K562 (cell line): ENCODE measurements at regions of chr15 and their contacts with region 1.

Region 1: DNA sequence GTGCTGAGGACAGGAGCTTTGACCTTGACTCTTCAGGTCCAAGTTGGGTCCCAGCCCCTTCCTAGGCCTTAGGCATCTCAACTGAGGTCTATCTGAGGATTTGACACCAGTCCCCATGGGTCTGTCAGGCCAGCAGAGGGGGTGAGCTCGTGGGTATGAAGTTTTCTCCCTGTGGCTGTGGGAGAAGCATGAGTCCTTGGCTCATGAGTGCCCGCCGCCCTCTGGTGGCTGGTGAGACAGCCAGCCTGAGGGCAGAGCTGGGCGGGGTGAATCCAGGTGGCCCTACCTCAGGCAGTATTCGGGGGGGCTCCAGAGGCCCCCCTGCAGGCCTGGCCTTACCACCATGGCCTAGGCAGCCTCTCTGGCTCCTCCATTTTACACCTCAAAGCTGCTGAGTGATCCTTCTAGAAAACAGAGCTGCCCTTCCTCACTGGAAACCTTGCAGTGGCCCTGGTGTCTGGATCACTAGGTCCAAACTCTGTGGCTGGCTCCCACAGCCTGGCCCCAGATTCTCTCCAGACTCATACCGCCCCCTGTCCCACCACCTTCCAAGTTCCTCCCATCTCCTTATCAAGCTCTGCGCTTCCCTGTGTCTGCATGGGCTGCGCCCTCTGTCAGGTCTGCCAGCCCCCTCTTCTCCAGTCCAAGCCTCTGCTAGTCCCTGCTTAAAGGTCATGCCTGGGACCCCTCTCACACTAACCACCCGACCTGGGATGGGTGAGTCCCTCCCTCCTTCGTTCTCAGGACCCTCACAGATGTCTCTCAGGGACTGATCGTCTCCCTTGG is 16.1 kb downstream of the SH2D7 start:
- DNase-seq: peak; percentile 73 to 75 (median 74)
- ATAC-seq: peak; percentile 92
- H3K4me3 ChIP-seq: no peak overlapping the region
- H3K27ac ChIP-seq: no peak overlapping the region
- H3K4me1 ChIP-seq: peaks cover 0 to 7% of the 10 kb centered on the region in 2 experiments; a peak in 2 of 5 replicates
- H3K27me3 ChIP-seq: no peaks in the 10 kb centered on the region
- CTCF ChIP-seq: peak; percentile 86 to 97 (median 89)
- EP300 ChIP-seq: no peak
- POLR2A ChIP-seq: no peak
- RAD21 ChIP-seq: peak; percentile 87 to 92

Region 2: GRCh38 chr15:77909182-77909940 is 199.1 kb before region 1 on chr15:
- CTCF ChIA-PET with region 1: no interaction called
- POLR2A ChIA-PET with region 1: no interaction called
- in situ Hi-C with region 1: no loop called
- intact Hi-C with region 1: no loop called
- DNase-seq: no peak
- ATAC-seq: no peak
- H3K4me3 ChIP-seq: no peak overlapping the region
- H3K27ac ChIP-seq: no peak overlapping the region
- H3K4me1 ChIP-seq: peaks cover 2 to 22% of the 10 kb centered on the region in 2 experiments; a peak in 3 of 5 replicates
- H3K27me3 ChIP-seq: peaks cover 0 to 11% of the 10 kb centered on the region in 2 experiments; a peak in 3 of 5 replicates
- CTCF ChIP-seq: no peak
- EP300 ChIP-seq: no peak
- POLR2A ChIP-seq: no peak
- RAD21 ChIP-seq: no peak

Region 3: DNA sequence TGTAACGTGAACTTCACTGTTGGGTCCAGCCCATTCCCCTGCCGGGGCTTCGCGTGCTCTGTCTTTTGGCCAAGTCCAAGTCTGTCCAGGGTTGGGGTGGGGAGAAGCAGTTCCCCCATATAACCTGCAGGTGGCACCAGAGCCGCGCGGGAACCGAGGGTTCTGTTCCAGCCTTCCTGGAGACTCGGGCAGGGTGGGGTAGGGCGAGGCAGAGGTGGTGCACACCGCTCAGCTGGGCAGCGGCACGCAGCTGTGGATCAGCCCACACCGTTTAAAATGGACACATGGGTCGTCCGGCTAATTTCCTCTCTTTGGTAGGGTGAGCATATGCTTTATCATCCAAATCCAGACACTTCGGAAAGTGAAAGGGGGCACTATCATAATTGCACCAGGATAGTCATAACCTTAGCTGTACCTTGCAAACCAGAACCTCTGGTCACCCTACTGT is 149.0 kb before region 1 on chr15:
- CTCF ChIA-PET with region 1: interaction called, 16 read pairs
- POLR2A ChIA-PET with region 1: interaction called, 3 read pairs
- in situ Hi-C with region 1: loop called (anchors 5 kb)
- intact Hi-C with region 1: loop called (anchors 1 kb)
- DNase-seq: peak; percentile 84 to 90 (median 90)
- ATAC-seq: peak; percentile 100
- H3K4me3 ChIP-seq: no peak overlapping the region
- H3K27ac ChIP-seq: no peak overlapping the region
- H3K4me1 ChIP-seq: peaks cover 0 to 5% of the 10 kb centered on the region in 2 experiments; a peak in 3 of 5 replicates
- H3K27me3 ChIP-seq: peaks cover 5 to 13% of the 10 kb centered on the region in 2 experiments; a peak in 3 of 5 replicates
- CTCF ChIP-seq: peak; percentile 93 to 96 (median 95)
- EP300 ChIP-seq: no peak
- POLR2A ChIP-seq: no peak
- RAD21 ChIP-seq: peak; percentile 93 to 94

Region 4: GRCh38 chr15:78000091-78000926 is 108.2 kb before region 1 on chr15:
- CTCF ChIA-PET with region 1: interaction called, 15 read pairs
- POLR2A ChIA-PET with region 1: interaction called, 3 read pairs
- in situ Hi-C with region 1: no loop called
- intact Hi-C with region 1: loop called (anchors 1 kb)
- DNase-seq: peak; percentile 46 to 72 (median 62)
- ATAC-seq: peak; percentile 96
- H3K4me3 ChIP-seq: no peak overlapping the region
- H3K27ac ChIP-seq: no peak overlapping the region
- H3K4me1 ChIP-seq: peaks cover 0 to 4% of the 10 kb centered on the region in 2 experiments; a peak in 1 of 5 replicates
- H3K27me3 ChIP-seq: no peaks in the 10 kb centered on the region
- CTCF ChIP-seq: peak; percentile 66 to 77 (median 73)
- EP300 ChIP-seq: no peak
- POLR2A ChIP-seq: no peak
- RAD21 ChIP-seq: peak; percentile 42 to 70; a peak in 3 of 4 replicates

Region 5: GRCh38 chr15:78012643-78013077 is 95.8 kb before region 1 on chr15:
- CTCF ChIA-PET with region 1: no interaction called
- POLR2A ChIA-PET with region 1: no interaction called
- in situ Hi-C with region 1: no loop called
- intact Hi-C with region 1: no loop called
- DNase-seq: no peak
- ATAC-seq: no peak
- H3K4me3 ChIP-seq: no peak overlapping the region
- H3K27ac ChIP-seq: no peak overlapping the region
- H3K4me1 ChIP-seq: no peaks in the 10 kb centered on the region
- H3K27me3 ChIP-seq: no peaks in the 10 kb centered on the region
- CTCF ChIP-seq: no peak
- EP300 ChIP-seq: no peak
- POLR2A ChIP-seq: no peak
- RAD21 ChIP-seq: no peak

Region 6: DNA sequence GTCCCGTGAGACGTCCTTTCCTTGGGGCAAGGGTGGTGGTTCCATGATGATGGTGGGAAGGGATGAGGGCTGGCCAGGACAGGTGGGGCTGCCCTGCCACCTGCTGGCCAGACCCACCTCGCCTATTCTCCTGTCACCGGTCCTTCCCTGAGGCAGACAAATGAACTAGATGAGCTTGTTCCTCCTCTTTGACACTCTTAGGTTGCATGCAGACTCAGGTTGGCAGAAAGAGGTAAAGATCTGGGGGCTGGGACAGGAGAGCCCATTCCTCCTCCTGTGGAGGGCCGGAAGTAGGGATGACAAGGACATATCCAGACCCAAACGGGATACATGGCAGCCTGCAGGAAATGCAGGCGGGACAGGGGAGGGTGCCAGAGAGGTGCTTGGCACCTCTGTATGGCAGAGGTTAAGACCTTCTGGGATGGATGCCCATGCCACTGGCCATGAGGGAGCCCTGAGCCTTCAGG is 87.3 kb after region 1 on chr15:
- CTCF ChIA-PET with region 1: interaction called, 54 read pairs
- POLR2A ChIA-PET with region 1: no interaction called
- in situ Hi-C with region 1: loop called (anchors 5 kb)
- intact Hi-C with region 1: loop called (anchors 1 kb)
- DNase-seq: peak; percentile 60 to 75 (median 71)
- ATAC-seq: peak; percentile 95
- H3K4me3 ChIP-seq: no peak overlapping the region
- H3K27ac ChIP-seq: no peak overlapping the region
- H3K4me1 ChIP-seq: peaks cover 0 to 4% of the 10 kb centered on the region in 2 experiments; a peak in 1 of 5 replicates
- H3K27me3 ChIP-seq: peaks cover 6 to 29% of the 10 kb centered on the region in 2 experiments; a peak in 4 of 5 replicates
- CTCF ChIP-seq: peak; percentile 85 to 90 (median 88)
- EP300 ChIP-seq: no peak
- POLR2A ChIP-seq: no peak
- RAD21 ChIP-seq: peak; percentile 82 to 93

Region 7: DNA sequence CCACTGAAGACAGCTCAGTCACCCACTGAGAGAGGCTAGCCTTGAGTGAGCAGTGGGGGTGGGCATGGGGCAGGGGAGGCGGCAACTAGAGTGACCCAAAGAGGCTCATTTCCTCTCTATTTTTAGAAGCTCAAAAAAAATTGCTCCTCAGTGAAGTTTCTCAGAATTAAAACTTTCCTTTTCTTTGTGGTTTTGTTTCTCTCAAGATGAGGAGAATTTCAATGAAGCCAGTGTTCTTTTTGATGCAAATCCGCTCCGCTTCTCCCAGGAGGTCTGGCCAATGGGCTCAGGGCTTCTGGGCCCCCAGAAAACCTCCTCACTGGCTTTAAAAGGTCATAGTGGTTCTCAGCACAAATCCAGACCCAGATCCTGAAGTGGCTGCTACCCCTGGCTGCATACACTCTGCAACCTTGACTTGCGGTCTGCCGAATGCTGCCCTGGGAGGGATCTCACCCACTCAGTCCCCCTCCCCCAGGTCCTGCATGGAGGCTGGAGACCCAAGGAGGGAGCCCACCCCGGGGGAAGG is 126.1 kb after region 1 on chr15 and contains the start of gene ACSBG1:
- CTCF ChIA-PET with region 1: interaction called, 25 read pairs
- POLR2A ChIA-PET with region 1: interaction called, 3 read pairs
- in situ Hi-C with region 1: loop called (anchors 5 kb)
- intact Hi-C with region 1: no loop called
- DNase-seq: no peak
- ATAC-seq: no peak
- H3K4me3 ChIP-seq: no peak within 1 kb of the TSS
- H3K27ac ChIP-seq: no peak within 1 kb of the TSS
- H3K4me1 ChIP-seq: peaks cover 0 to 4% of the 10 kb centered on the region in 2 experiments; a peak in 1 of 5 replicates
- H3K27me3 ChIP-seq: peaks cover 17 to 50% of the 10 kb centered on the region in 2 experiments; a peak in 4 of 5 replicates
- CTCF ChIP-seq: no peak
- EP300 ChIP-seq: no peak
- POLR2A ChIP-seq: no peak
- RAD21 ChIP-seq: no peak
- polyA plus RNA-seq, gene ACSBG1: 0.36 to 0.75 TPM

Region 8: GRCh38 chr15:78241007-78241406 is 132.5 kb after region 1 on chr15:
- CTCF ChIA-PET with region 1: interaction called, 25 read pairs
- POLR2A ChIA-PET with region 1: interaction called, 3 read pairs
- in situ Hi-C with region 1: loop called (anchors 5 kb)
- intact Hi-C with region 1: loop called (anchors 1 kb)
- DNase-seq: peak; percentile 86 to 89 (median 86)
- ATAC-seq: peak; percentile 94
- H3K4me3 ChIP-seq: no peak overlapping the region
- H3K27ac ChIP-seq: no peak overlapping the region
- H3K4me1 ChIP-seq: peaks cover 19 to 21% of the 10 kb centered on the region in 2 experiments
- H3K27me3 ChIP-seq: peaks cover 0 to 3% of the 10 kb centered on the region in 2 experiments; a peak in 1 of 5 replicates
- CTCF ChIP-seq: peak; percentile 84 to 93 (median 88)
- EP300 ChIP-seq: no peak
- POLR2A ChIP-seq: no peak
- RAD21 ChIP-seq: peak; percentile 91 to 93

Region 9: DNA sequence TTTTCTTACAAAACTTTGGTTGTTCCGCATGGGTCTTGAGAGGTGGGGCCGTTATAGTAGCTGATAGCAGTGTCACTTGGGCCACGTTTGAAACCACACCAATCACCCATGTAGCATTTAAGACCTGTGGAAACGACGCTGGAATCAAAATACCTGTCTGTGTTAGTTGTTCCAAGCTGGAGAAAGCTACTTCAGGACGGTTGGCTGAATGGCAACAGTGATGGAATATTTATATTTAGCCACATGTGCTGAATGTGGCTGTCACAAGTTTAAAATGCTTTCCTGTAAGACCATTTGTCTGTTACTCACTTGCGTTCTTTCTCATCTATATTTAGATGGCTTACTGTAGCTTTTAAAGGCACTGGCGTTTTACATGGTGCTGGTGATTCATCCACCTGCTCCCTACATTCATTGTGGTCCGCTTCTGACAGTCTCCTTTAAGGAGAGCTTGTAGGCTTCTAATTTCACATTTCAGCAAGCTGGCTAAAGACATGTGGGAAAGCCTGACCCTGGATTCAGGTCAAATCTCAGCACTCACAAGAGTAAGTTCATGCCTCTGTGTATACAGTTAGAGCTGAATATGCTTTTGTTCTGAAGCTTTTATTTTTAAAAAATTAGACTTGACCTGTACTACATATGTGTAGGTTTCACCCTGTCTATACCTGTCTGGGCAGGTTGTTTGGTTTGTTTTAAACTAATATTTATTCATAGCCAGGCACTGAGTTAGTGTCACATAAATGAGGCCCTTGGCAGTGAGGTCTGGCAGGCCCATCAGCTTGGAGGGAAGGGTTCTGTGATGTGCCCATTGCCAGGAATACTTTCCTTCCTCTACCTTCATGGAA is 157.5 kb after region 1 on chr15:
- CTCF ChIA-PET with region 1: no interaction called
- POLR2A ChIA-PET with region 1: no interaction called
- in situ Hi-C with region 1: no loop called
- intact Hi-C with region 1: no loop called
- DNase-seq: no peak
- ATAC-seq: no peak
- H3K4me3 ChIP-seq: no peak overlapping the region
- H3K27ac ChIP-seq: no peak overlapping the region
- H3K4me1 ChIP-seq: peaks cover 7 to 15% of the 10 kb centered on the region in 2 experiments; a peak in 4 of 5 replicates
- H3K27me3 ChIP-seq: no peaks in the 10 kb centered on the region
- CTCF ChIP-seq: no peak
- EP300 ChIP-seq: no peak
- POLR2A ChIP-seq: no peak
- RAD21 ChIP-seq: no peak